Activated CD8-positive, alpha-beta T cell treated with anti-CD3 and anti-CD28 coated beads for 36 hours (primary cell): ENCODE measurements at regions of chr18 and their contacts with region 1.

Region 1: GRCh38 chr18:35290073-35290735 is at the start of gene ZSCAN30:
- DNase-seq: peak; percentile 96
- ATAC-seq: peak; percentile 99
- H3K4me3 Mint-ChIP-seq: peak within 1 kb of the TSS; percentile 97
- H3K27ac Mint-ChIP-seq: peak within 1 kb of the TSS; percentile 95
- H3K4me1 Mint-ChIP-seq: peaks cover 56% of the 10 kb centered on the region
- H3K27me3 Mint-ChIP-seq: peaks cover 1% of the 10 kb centered on the region
- CTCF ChIP-seq: no peak
- total RNA-seq, gene ZSCAN30: 20.7 to 22.5 TPM

Region 2: DNA sequence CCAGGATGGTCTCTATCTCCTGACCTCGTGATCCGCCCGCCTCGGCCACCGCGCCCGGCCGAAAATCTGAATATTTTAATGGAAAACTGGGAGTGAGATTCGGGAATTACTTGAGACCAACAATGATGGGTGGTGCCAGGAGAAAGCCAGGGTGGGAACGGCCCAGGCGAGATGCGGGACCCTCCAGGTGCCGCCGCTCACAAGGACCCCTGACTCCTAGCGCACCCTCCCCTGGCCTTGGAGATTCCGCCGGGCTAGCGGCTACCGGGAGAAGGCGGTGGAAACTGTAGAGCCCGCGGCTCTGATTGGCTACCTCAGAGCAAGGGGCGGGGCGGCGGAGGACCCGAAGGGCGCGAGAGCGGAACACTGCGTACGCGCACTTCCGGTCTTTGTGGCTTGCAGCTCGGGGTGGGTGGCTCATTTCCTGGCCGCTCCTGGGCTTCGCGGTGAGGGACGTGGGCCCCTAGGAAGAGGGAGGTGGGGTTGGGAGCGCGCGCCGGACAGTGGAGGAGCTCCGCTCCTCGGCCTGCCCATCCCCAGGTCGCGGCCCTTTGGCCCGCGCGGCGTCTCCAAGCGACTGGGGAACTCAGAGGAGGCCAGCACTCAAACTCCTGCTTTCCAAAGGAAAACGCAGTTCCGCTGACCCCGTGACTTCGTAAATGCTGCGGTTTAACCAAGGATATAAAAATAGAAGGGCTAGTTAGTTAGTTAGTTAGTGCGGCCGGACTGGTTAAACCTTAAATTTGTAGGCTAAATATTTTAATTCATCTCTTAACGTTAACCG is 49.3 kb before region 1 on chr18 and contains the start of gene ZNF397:
- CTCF ChIA-PET with region 1: no interaction called
- POLR2A ChIA-PET with region 1: interaction called, 6 read pairs
- intact Hi-C with region 1: loop called (anchors 2 kb)
- DNase-seq: peak; percentile 98
- ATAC-seq: peak; percentile 99
- H3K4me3 Mint-ChIP-seq: peak within 1 kb of the TSS; percentile 94
- H3K27ac Mint-ChIP-seq: peak within 1 kb of the TSS; percentile 98
- H3K4me1 Mint-ChIP-seq: peaks cover 32% of the 10 kb centered on the region
- H3K27me3 Mint-ChIP-seq: no peaks in the 10 kb centered on the region
- CTCF ChIP-seq: no peak
- total RNA-seq, gene ZNF397: 17.9 to 18.9 TPM

Region 3: DNA sequence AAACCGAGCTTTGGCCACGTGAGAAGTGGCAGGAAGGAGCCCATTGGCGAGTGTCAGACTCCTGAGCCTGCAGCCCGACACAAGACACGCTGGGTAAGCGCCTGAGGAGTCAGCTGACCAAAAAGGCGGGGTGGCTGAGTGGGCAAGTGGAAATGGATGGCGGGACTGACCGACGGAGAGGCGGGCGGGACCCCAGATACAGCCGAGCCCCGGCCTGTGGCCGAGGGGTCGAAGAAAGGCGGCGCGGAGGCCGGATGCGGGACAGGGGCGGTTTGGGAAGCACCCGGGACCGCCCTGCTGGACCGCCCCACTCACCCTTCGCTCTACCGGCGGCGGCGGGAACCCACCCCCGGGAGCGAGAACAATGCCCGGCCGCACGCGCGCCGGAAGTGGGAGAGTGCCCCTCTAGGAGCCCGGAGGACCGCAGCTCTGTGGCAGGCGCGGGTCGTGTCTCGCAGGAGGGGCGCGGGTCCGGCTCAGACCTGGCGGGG is 23.0 kb before region 1 on chr18:
- CTCF ChIA-PET with region 1: interaction called, 10 read pairs
- POLR2A ChIA-PET with region 1: interaction called, 11 read pairs
- intact Hi-C with region 1: loop called (anchors 2 kb)
- DNase-seq: peak; percentile 72
- ATAC-seq: peak; percentile 85
- H3K4me3 Mint-ChIP-seq: peak overlapping the region; percentile 79
- H3K27ac Mint-ChIP-seq: peak overlapping the region; percentile 94
- H3K4me1 Mint-ChIP-seq: peaks cover 25% of the 10 kb centered on the region
- H3K27me3 Mint-ChIP-seq: no peaks in the 10 kb centered on the region
- CTCF ChIP-seq: no peak

Region 4: DNA sequence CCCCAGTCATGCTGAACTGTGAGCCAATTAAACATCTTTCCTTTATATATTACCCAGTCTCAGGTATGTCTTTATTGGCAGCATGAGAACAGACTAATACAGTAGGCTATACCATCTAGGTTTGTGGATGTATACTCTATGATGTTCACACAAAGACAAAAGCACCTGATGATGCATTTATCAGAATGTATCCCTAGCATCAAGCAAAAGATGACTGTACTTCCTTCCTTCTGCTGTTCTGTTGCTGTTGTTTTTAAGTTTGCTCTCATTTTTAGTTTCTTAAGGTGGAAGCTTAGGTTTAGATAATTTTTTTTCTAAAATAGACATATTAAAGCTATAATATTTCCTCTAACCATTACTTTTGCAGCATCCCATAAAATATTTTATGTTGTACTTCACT is 12.6 kb before region 1 on chr18:
- CTCF ChIA-PET with region 1: interaction called, 4 read pairs
- POLR2A ChIA-PET with region 1: interaction called, 11 read pairs
- intact Hi-C with region 1: no loop called
- DNase-seq: no peak
- ATAC-seq: peak; percentile 39
- H3K4me3 Mint-ChIP-seq: no peak overlapping the region
- H3K27ac Mint-ChIP-seq: no peak overlapping the region
- H3K4me1 Mint-ChIP-seq: peaks cover 15% of the 10 kb centered on the region
- H3K27me3 Mint-ChIP-seq: no peaks in the 10 kb centered on the region
- CTCF ChIP-seq: no peak